ENCODE measurements at regions of chr6 and their contacts with region 1.

Region 1: GRCh38 chr6:137025786-137026456 is 18.8 kb downstream of the IL20RA start:
- DNase-seq: peak in 1 of 2 experiments; percentile 93
- H3K4me3 ChIP-seq: peak overlapping the region; percentile 46
- H3K27ac ChIP-seq: peak overlapping the region; percentile 100
- H3K4me1 ChIP-seq: peaks cover 71% of the 10 kb centered on the region
- H3K27me3 ChIP-seq: no peaks in the 10 kb centered on the region
- CTCF ChIP-seq: peak; percentile 22; the same call in 1 of the 2 replicates

Region 2: DNA sequence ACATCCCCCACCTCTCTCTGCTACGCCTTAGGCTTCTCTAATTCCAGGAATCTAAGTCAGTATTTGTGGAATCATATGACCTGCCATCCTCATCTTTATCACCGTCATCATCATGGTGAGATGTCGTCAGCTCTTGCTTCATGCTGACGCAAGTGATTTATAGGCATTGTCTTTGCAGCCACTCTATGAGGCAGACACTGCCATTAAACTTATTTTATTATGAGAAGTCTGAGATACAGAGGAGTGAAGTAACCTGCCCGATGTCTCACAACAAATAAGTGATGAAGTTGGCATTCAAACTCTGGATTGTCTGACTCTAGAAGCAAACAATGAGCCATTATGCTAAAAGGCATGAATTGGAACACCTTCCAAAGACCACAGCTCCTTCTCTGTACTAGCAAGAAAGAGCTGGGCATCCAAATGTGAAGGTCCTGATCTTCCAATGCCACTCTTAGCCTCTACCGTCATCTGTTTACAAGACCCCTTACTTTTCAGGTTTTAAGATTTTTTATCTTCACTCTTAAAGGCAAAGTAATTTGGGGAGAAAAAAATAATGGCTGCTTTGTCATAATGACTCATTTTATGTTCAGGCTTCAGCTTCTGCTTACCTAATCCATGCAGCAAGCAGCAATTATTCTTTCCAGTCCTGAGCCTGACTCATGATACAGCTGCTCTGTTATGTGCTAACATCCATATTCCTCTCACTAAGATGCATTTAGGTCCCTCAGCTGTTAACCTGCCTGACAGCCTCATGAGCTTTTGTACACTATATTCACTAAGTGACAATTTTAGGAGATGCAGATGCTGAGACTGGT is 622.5 kb before region 1 on chr6:
- CTCF ChIA-PET with region 1: no interaction called
- POLR2A ChIA-PET with region 1: no interaction called
- intact Hi-C with region 1: loop called (anchors 5 kb)
- DNase-seq: peak; percentile 29 to 97
- H3K4me3 ChIP-seq: peak overlapping the region; percentile 0; the same call in 1 of the 2 replicates
- H3K27ac ChIP-seq: peak overlapping the region; percentile 88
- H3K4me1 ChIP-seq: peaks cover 42% of the 10 kb centered on the region
- H3K27me3 ChIP-seq: no peaks in the 10 kb centered on the region
- CTCF ChIP-seq: no peak

Region 3: GRCh38 chr6:137001299-137001976 is 24.5 kb before region 1 on chr6:
- CTCF ChIA-PET with region 1: no interaction called
- POLR2A ChIA-PET with region 1: no interaction called
- intact Hi-C with region 1: loop called (anchors 1 kb)
- DNase-seq: peak; percentile 22 to 76
- H3K4me3 ChIP-seq: 0 out of 2 replicates have a peak overlapping the region, but pooled peaks have one; percentile 0
- H3K27ac ChIP-seq: peak overlapping the region; percentile 75
- H3K4me1 ChIP-seq: peaks cover 38% of the 10 kb centered on the region
- H3K27me3 ChIP-seq: no peaks in the 10 kb centered on the region
- CTCF ChIP-seq: no peak

Measured in PC-9 (cell line).